ENCODE measurements at regions of chr1 and their contacts with region 1.

Region 1: DNA sequence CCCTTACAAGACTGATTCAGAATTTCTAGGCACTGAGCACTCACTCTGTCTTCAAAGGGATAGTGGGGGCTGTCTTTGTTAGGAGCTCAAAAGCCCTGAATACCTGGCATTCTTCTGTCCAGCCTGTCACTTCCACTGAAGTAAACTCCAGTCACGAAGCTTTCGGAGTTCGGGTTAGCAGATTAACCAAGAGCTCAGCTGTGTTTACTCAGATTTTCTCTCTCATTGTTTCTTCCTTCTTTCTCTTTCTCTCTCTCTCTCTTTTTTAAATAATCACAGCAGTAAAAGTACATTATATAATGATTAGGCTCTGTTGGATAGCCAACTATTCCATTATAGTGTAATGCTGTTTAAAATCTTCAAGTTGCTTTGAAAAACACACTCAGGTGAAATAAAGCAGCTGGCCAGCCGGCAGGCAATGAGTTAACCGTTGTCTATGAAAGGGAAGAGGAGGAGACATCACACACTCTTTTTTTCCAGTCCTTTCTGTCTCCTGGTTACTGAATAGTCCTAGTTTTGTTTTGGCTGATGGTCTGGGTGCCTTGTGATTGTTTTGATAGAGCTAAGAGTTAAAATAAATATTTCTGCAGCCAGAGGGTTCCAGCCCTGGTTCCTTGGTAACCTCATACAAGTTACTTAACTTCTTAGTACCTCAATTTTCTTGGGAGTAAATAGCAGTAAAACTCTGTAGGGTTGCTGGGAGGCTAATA is 89.8 kb downstream of the ADSS2 start:
- DNase-seq: peak; percentile 79 to 82
- H3K4me3 ChIP-seq: no peak overlapping the region
- H3K4me3 Mint-ChIP-seq: peak overlapping the region; percentile 65
- H3K27ac Mint-ChIP-seq: peak overlapping the region; percentile 85
- H3K4me1 ChIP-seq: peaks cover 32% of the 10 kb centered on the region
- H3K4me1 Mint-ChIP-seq: peaks cover 17% of the 10 kb centered on the region
- H3K27me3 ChIP-seq: no peaks in the 10 kb centered on the region
- H3K27me3 Mint-ChIP-seq: no peaks in the 10 kb centered on the region
- CTCF ChIP-seq: no peak

Region 2: GRCh38 chr1:244297616-244298015 is 64.3 kb before region 1 on chr1:
- CTCF ChIA-PET with region 1: no interaction called
- POLR2A ChIA-PET with region 1: no interaction called
- intact Hi-C with region 1: loop called (anchors 2 kb)
- DNase-seq: no peak
- H3K4me3 ChIP-seq: no peak overlapping the region
- H3K4me3 Mint-ChIP-seq: no peak overlapping the region
- H3K27ac Mint-ChIP-seq: no peak overlapping the region
- H3K4me1 ChIP-seq: peaks cover 8% of the 10 kb centered on the region; the same call in 1 of the 2 replicates
- H3K4me1 Mint-ChIP-seq: peaks cover 10% of the 10 kb centered on the region
- H3K27me3 ChIP-seq: no peaks in the 10 kb centered on the region
- H3K27me3 Mint-ChIP-seq: no peaks in the 10 kb centered on the region
- CTCF ChIP-seq: no peak

Region 3: DNA sequence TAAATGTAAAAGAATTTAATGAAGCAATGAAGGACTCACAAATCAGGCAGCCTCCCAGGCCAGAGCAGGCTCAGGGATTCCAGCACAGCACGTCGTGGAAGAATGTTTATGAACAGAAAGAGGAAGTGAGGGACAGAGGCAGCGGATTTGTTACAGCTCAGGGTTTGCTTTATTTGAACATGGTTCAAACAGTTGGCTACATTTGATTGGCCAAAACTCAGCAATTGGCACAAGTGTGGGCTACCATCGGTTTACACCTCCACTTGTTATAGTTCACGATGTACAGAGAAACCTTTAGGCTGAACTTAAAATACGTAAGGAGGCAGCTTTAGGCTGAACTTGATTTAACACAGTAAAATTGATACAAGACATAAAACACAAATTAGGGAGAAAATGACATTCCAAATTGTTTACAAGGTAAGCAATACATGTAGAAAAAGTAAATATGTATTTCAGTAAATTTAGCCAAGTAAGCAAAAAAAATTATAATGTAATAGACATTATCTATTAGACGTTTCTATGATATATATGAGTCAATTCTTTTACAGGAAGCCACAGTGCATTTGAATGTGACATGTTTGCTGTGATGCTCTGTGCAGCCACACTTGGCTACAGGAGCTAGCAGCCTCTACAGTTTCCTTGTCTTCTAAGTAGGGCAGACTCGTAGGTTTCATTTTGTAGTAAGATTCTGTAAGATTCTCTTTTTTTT is 36.7 kb before region 1 on chr1:
- CTCF ChIA-PET with region 1: no interaction called
- POLR2A ChIA-PET with region 1: no interaction called
- intact Hi-C with region 1: loop called (anchors 5 kb)
- DNase-seq: no peak
- H3K4me3 ChIP-seq: no peak overlapping the region
- H3K4me3 Mint-ChIP-seq: no peak overlapping the region
- H3K27ac Mint-ChIP-seq: peak overlapping the region; percentile 33
- H3K4me1 ChIP-seq: peaks cover 47% of the 10 kb centered on the region
- H3K4me1 Mint-ChIP-seq: peaks cover 33% of the 10 kb centered on the region
- H3K27me3 ChIP-seq: no peaks in the 10 kb centered on the region
- H3K27me3 Mint-ChIP-seq: no peaks in the 10 kb centered on the region
- CTCF ChIP-seq: no peak

Region 4: GRCh38 chr1:244347942-244348341 is 14.0 kb before region 1 on chr1:
- CTCF ChIA-PET with region 1: no interaction called
- POLR2A ChIA-PET with region 1: no interaction called
- intact Hi-C with region 1: loop called (anchors 1 kb)
- DNase-seq: peak; percentile 62 to 77
- H3K4me3 ChIP-seq: no peak overlapping the region
- H3K4me3 Mint-ChIP-seq: no peak overlapping the region
- H3K27ac Mint-ChIP-seq: no peak overlapping the region
- H3K4me1 ChIP-seq: peaks cover 21% of the 10 kb centered on the region
- H3K4me1 Mint-ChIP-seq: peaks cover 27% of the 10 kb centered on the region
- H3K27me3 ChIP-seq: no peaks in the 10 kb centered on the region
- H3K27me3 Mint-ChIP-seq: no peaks in the 10 kb centered on the region
- CTCF ChIP-seq: no peak

Region 5: DNA sequence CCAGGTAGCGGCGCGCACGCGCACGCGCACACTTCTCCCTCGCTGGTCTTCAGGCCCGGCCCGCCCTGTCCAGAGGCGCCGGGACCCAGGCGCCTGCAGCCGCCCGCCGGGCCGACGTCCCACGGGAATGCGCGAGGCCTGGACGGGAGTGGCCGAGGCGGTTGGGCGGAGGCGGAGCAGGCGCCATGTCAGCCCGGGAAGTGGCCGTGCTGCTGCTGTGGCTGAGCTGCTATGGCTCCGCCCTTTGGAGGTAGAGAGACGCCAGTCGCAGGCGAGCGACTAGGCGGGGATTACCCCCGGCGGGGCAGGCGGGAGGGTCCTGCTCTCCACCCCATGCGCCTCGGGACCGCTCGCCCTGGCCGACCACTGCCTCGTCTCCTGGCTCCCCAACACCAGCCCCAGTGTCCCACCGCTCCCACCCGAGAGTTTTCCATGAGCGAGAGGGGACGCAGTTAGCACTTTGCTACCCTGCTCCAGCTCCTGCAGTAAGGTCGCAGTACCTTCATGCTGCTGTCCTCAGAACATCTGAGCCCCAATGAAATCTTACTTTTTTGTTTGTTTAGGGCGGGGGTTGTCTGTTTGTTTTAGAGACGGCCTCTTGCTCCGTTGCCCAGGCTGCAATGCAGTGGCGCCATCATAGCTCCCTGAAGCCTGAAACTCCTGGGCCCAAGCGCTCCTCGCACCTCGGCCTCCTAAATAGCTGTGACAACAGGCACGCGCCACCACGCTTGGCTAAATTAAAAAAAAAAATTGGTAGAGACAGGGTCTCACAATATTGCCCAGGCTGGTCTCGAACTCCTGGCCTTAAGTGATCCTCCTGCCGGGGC is 99.5 kb after region 1 on chr1 and contains the start of gene CATSPERE:
- CTCF ChIA-PET with region 1: no interaction called
- POLR2A ChIA-PET with region 1: no interaction called
- intact Hi-C with region 1: loop called (anchors 2 kb)
- DNase-seq: peak; percentile 95
- H3K4me3 ChIP-seq: peak within 1 kb of the TSS; percentile 58
- H3K4me3 Mint-ChIP-seq: peak within 1 kb of the TSS; percentile 68
- H3K27ac Mint-ChIP-seq: peak within 1 kb of the TSS; percentile 85
- H3K4me1 ChIP-seq: peaks cover 44% of the 10 kb centered on the region
- H3K4me1 Mint-ChIP-seq: peaks cover 28% of the 10 kb centered on the region
- H3K27me3 ChIP-seq: no peaks in the 10 kb centered on the region
- H3K27me3 Mint-ChIP-seq: no peaks in the 10 kb centered on the region
- CTCF ChIP-seq: no peak
- total RNA-seq, gene CATSPERE: 0.14 and 0.79 TPM in 2 replicates